Activated CD4-positive, alpha-beta memory T cell treated with anti-CD3 and anti-CD28 coated beads, Interleukin-2, amount 10 ng/mL, durations not matched to agents 7 days and 5 days (primary cell): ENCODE measurements at regions of chr1 and their contacts with region 1.

Region 1: DNA sequence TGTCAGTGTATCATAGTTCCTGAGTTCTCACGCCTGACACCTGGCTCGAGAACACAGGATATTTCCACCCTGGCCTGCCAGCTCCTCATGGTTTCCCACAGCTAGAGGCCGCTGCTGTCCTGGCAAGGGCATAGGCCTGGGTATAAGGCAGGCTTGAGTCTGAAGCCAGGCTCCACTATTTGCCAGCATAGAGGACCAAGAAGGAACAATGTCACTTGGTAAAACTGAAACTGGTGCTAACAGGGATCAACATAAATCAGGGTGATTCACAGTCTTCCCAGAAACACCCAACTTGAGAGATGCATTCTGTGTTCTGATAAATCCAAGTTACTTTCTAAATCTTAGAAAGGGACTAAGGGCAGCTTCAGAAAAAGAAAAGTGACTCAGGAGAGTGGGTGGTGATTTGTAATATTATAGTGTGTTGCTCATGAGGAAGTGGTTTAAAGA is 6.9 kb upstream of the S100A2 start:
- DNase-seq: peak; percentile 69
- H3K4me3 Mint-ChIP-seq: no peak overlapping the region
- H3K27ac Mint-ChIP-seq: peak overlapping the region; percentile 54
- H3K4me1 Mint-ChIP-seq: peaks cover 49% of the 10 kb centered on the region
- H3K27me3 Mint-ChIP-seq: peaks cover 9% of the 10 kb centered on the region

Region 2: DNA sequence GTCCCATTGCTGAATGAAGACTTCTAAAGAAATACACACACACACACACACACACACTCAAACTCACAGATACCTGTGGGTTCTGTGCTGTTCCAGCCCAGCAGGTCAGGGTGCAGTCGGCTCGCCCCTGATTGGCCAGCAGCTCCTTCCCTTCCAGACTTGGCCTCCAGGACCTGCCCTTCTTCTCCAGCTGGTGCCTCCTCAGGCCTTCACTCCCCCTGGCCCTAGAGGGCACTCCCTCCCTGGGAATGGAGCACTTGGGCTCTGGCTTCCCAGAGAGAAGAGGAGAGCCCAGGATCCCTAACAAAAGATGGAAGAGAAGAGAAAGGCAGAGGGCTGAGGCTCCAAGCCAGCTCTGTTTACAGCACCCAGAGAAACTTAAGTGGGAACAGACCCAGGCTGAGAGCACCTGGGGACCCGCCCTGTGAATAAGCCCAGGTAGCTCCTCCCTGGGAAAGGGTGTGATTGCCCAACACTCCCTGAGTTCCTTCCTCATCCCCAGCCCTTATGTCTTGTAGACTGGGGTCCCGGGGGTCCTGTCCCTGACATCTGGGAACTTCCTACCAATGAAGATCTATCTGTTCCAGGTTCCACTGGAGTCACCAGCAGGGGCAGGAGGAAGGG is 259.9 kb before region 1 on chr1 and contains the start of gene PGLYRP3:
- CTCF ChIA-PET with region 1: no interaction called
- POLR2A ChIA-PET with region 1: no interaction called
- DNase-seq: no peak
- H3K4me3 Mint-ChIP-seq: no peak within 1 kb of the TSS
- H3K27ac Mint-ChIP-seq: no peak within 1 kb of the TSS
- H3K4me1 Mint-ChIP-seq: no peaks in the 10 kb centered on the region
- H3K27me3 Mint-ChIP-seq: peaks cover 23% of the 10 kb centered on the region
- total RNA-seq, gene PGLYRP3: not detected

Region 3: GRCh38 chr1:153390938-153391710 is 181.5 kb before region 1 on chr1 and contains the start of gene S100A8:
- CTCF ChIA-PET with region 1: no interaction called
- POLR2A ChIA-PET with region 1: no interaction called
- DNase-seq: no peak
- H3K4me3 Mint-ChIP-seq: no peak within 1 kb of the TSS
- H3K27ac Mint-ChIP-seq: no peak within 1 kb of the TSS
- H3K4me1 Mint-ChIP-seq: peaks cover 7% of the 10 kb centered on the region
- H3K27me3 Mint-ChIP-seq: peaks cover 20% of the 10 kb centered on the region
- total RNA-seq, gene S100A8: not detected

Region 4: DNA sequence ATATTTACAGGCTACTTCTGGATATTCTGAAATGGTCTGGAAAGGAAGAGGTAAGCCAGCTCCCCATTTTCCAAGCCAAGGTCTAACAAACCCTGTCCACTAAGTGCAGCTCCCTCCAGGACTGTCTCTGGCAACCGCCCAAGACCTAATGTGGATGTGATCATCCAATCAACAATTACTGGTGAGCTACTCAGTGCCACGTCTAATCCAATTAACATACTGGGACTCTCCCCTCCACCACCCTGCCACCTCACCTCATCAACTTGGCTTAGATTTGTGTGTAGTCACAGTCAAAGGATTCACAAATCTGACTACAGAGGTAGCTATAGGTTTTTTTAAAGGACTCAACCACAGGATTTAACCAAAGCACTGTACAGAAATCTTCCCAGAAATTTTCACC is 86.7 kb before region 1 on chr1:
- CTCF ChIA-PET with region 1: no interaction called
- POLR2A ChIA-PET with region 1: no interaction called
- DNase-seq: no peak
- H3K4me3 Mint-ChIP-seq: no peak overlapping the region
- H3K27ac Mint-ChIP-seq: no peak overlapping the region
- H3K4me1 Mint-ChIP-seq: no peaks in the 10 kb centered on the region
- H3K27me3 Mint-ChIP-seq: peaks cover 33% of the 10 kb centered on the region

Region 5: DNA sequence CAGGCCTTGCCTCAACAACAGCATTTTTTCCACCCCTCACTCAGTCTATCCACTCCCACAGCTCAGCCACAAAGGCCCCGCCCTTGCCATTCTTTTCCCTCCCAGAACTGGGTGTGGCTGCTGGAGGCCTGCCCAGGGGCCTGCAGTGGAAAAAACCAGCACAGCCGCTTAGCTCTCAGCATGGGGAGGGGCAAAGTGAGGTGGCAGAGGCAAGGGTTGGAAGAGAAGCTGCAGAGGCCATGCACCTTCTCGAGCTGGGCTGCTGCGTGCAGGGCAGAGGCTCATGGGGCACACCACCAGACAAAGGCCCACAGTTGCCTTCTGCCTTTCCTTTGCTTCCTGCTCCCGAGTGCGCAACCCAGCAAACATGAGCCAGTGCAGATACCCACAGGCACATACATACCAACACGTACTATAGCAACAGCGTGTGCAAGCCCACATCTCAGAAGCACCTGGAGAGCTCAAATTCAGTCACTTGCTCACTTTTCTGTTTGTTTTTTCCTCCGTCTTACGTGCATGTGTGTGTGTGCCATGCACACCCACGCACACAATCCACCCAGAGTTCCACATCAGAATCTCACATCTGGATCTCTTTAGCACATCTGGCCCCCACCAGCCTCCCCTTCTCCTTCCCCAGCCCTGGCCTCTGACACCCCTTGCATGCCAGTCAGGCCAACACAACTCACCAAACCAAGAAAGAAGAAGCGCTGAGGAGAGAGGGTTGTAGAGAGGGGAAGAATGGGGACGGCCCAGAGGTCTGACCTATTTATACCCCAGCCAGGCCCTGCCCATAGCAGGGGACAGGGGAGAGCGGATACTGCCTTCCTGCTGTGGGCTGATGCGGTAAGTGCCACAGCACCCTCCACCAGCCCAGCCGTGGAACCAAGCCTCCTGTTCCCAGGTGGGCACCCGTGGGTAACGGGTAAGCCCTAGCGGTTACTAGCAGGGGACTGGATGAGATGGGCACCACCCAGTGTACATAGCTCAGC is 27.2 kb before region 1 on chr1 and contains the start of gene S100A4:
- CTCF ChIA-PET with region 1: interaction called, 26 read pairs
- POLR2A ChIA-PET with region 1: interaction called, 12 read pairs
- DNase-seq: peak; percentile 97
- H3K4me3 Mint-ChIP-seq: peak within 1 kb of the TSS; percentile 96
- H3K27ac Mint-ChIP-seq: peak within 1 kb of the TSS; percentile 98
- H3K4me1 Mint-ChIP-seq: peaks cover 90% of the 10 kb centered on the region
- H3K27me3 Mint-ChIP-seq: peaks cover 3% of the 10 kb centered on the region
- total RNA-seq, gene S100A4: 1,297 to 1,322 TPM

Region 6: GRCh38 chr1:153592748-153593147 is 20.2 kb after region 1 on chr1:
- CTCF ChIA-PET with region 1: interaction called, 13 read pairs
- POLR2A ChIA-PET with region 1: interaction called, 3 read pairs
- DNase-seq: no peak
- H3K4me3 Mint-ChIP-seq: no peak overlapping the region
- H3K27ac Mint-ChIP-seq: no peak overlapping the region
- H3K4me1 Mint-ChIP-seq: peaks cover 9% of the 10 kb centered on the region
- H3K27me3 Mint-ChIP-seq: no peaks in the 10 kb centered on the region

Region 7: GRCh38 chr1:153617675-153618074 is 45.1 kb after region 1 on chr1:
- CTCF ChIA-PET with region 1: interaction called, 42 read pairs
- POLR2A ChIA-PET with region 1: interaction called, 3 read pairs
- DNase-seq: peak; percentile 75
- H3K4me3 Mint-ChIP-seq: no peak overlapping the region
- H3K27ac Mint-ChIP-seq: no peak overlapping the region
- H3K4me1 Mint-ChIP-seq: peaks cover 4% of the 10 kb centered on the region
- H3K27me3 Mint-ChIP-seq: no peaks in the 10 kb centered on the region